Left ventricle myocardium superior (tissue), 1 donor: ENCODE measurements at regions of chr20 and their contacts with region 1.

Region 1: GRCh38 chr20:53959911-53960578 is 110.3 kb downstream of the BCAS1 start:
- DNase-seq: no peak
- ATAC-seq: peak; percentile 89

Region 2: GRCh38 chr20:53346341-53346660 is 613.7 kb before region 1 on chr20:
- intact Hi-C with region 1: no loop called
- DNase-seq: no peak
- ATAC-seq: no peak

Region 3: GRCh38 chr20:53786445-53787267 is 173.4 kb before region 1 on chr20:
- intact Hi-C with region 1: no loop called
- DNase-seq: no peak
- ATAC-seq: no peak

Region 4: DNA sequence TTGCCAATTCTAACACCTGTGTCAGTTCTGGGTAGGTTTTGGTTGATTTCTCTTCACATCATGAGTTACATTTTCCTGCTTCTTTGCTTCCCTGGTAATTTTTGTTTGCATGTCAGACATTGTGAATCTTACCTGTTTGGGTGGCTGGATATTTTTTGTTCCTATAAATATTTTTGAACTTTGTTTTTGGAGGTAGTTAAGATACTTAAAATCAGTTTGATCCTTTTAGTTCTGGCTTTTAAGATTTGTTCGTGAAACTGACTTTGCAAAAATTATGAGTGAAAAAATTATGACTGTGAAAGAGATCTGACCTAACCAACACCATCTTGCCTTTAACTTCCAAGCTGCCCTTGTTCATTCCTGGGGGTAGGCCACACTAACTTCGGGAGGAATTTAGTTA is 40.9 kb after region 1 on chr20:
- intact Hi-C with region 1: loop called (anchors 1 kb)
- DNase-seq: no peak
- ATAC-seq: no peak

Region 5: GRCh38 chr20:54451171-54451570 is 491.1 kb after region 1 on chr20:
- intact Hi-C with region 1: no loop called
- DNase-seq: no peak
- ATAC-seq: no peak